Activated CD4-positive, alpha-beta T cell treated with anti-CD3 and anti-CD28 coated beads, Interleukin-2, amount 10 ng/mL, durations not matched to agents 24 days and 14 days (primary cell): ENCODE measurements at regions of chr6 and their contacts with region 1.

Region 1: DNA sequence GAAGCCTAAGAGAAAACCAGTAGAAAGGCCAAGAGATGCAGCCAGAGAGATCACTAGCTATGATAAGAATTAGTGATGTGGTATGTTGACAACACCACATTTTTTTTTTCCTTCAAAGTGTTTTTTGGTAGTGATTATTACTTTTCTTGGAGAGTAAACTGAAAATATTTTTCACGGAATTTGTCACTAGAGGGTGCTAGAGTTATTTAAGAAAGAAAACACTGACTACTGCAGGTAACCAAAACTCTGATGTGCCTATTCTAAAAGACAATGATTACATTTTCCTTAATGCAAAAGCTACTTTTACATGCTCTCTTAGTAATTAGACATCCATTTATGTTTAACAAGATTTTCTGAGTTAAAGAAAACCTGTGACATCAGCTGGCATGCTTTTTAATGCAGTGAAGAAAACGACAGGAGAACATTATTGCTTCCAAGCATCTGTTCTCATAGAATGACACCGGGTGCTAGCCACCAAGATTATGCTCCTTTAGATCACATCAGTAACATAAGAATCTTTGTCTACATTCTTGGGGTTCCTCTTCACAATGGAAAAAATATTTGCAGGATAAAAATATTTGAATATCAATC is 28.8 kb downstream of the RWDD2A start:
- DNase-seq: no peak
- H3K4me3 Mint-ChIP-seq: no peak overlapping the region
- H3K27ac Mint-ChIP-seq: no peak overlapping the region
- H3K4me1 Mint-ChIP-seq: no peaks in the 10 kb centered on the region
- H3K27me3 Mint-ChIP-seq: peaks cover 3% of the 10 kb centered on the region

Region 2: GRCh38 chr6:82906951-82907350 is 315.0 kb before region 1 on chr6:
- intact Hi-C with region 1: no loop called
- DNase-seq: no peak
- H3K4me3 Mint-ChIP-seq: no peak overlapping the region
- H3K27ac Mint-ChIP-seq: no peak overlapping the region
- H3K4me1 Mint-ChIP-seq: no peaks in the 10 kb centered on the region
- H3K27me3 Mint-ChIP-seq: no peaks in the 10 kb centered on the region

Region 3: DNA sequence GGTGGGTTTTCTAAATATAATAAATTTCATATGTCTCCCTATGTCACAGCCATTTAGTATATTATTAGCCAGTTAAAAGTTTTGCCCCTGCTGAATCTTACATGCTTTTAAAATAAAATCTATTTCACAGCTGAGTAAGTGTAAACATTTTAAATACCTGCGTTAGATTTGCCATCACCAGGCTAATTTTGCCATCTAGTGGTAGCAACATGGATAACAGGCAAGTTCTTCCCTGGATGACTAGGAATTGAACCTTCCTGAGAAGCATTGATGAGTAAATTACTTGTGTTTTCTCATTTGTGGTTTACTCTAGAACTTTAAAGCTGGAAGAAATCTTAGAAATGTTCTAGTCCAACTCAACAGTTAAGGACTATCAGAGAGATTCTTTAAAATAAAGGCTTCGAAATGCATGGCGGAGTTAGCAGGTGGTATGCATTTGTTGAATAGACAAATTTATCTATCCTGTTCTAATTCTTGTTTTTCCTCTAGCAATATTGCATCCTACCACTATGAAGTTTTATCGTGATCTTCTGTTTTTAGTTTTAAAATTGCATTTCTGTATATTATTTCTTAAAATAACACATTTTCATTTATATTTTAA is 293.0 kb after region 1 on chr6:
- intact Hi-C with region 1: loop called (anchors 1 kb)
- DNase-seq: peak; percentile 75
- H3K4me3 Mint-ChIP-seq: no peak overlapping the region
- H3K27ac Mint-ChIP-seq: no peak overlapping the region
- H3K4me1 Mint-ChIP-seq: peaks cover 3% of the 10 kb centered on the region
- H3K27me3 Mint-ChIP-seq: peaks cover 35% of the 10 kb centered on the region

Region 4: DNA sequence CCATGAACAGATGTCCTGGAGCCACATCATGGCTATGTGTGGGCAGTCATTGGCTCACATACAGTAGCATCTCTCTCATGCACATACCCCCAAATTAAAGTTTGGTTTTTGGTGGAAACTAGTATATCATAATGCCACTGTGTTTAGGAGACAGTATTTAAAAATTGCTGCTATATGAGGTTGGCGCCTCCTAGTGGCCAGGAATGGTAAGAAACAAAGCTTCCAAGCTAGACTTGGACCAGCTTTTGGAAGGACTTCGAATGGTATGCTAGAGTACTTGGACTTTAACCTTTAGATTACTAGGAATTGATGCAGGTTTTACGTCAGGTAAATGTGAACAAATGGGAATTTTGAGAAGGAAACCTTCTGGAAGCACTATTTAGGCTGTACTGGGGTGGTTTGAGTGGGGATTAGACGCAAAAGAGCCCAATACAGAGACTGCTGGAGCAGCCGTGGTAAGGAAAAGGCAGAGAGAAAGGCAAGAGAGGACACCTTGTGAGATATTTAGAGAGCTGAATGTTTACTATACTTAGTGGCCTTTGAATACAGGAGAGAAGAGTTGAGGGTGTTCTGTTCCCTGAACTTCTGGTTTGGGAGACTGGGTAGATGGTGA is 314.2 kb after region 1 on chr6:
- intact Hi-C with region 1: loop called (anchors 1 kb)
- DNase-seq: peak; percentile 81
- H3K4me3 Mint-ChIP-seq: no peak overlapping the region
- H3K27ac Mint-ChIP-seq: no peak overlapping the region
- H3K4me1 Mint-ChIP-seq: no peaks in the 10 kb centered on the region
- H3K27me3 Mint-ChIP-seq: peaks cover 4% of the 10 kb centered on the region